ENCODE measurements at regions of chr12 and their contacts with region 1.

Region 1: DNA sequence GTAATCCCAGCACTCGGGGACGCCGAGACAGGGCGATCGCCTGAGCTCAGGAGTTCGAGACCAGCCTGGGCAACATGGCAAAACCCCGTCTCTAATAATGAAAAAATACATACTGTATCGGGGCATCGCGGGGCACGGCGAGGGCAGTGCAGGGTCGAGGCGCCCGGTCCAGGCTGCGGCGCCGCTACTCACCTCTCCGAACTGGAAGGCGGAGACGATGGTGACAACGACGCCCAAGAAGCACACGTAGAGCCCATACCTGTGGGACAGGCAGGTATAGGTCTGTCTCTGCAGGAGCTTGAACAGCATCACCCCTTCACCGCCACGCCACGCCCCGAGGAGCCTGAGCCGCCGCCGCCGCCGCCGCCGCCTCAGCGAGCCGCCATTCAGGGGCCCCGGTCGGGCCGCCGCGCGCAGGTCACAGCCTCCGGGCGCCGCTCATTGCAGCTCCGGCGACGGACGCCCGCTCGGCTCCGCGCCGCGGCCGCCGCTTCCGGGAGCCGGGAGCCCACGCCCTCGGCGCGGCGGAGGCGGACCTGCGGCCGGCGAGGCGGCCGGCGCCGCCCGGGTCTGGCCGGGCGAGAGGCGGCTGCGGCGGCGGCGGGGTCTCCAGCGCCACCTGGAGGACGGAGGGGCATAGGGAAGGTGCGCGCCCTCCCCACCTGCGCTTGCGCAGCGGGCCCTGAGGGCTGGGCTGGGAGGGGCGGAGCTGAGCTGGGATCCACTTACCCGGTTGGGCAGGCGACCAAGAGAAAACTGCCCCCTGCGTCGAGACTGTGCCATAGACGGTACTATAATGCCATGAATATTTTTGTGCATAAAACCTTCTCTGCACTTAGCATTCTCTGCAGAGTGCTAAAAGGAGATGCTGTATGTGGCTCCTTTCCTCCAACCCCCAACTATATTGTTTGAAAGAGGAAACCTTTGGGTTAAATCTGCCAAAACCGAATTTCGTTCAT is at the start of gene GNPTAB:
- DNase-seq: peak; percentile 93 to 98 (median 96)
- ATAC-seq: peak; percentile 89
- H3K4me3 ChIP-seq: peak within 1 kb of the TSS; percentile 92
- H3K4me3 Mint-ChIP-seq: peak within 1 kb of the TSS; percentile 94
- H3K27ac ChIP-seq: peak within 1 kb of the TSS; percentile 61 to 67
- H3K27ac Mint-ChIP-seq: peak within 1 kb of the TSS; percentile 97
- H3K4me1 ChIP-seq: peaks cover 34% of the 10 kb centered on the region
- H3K4me1 Mint-ChIP-seq: peaks cover 47% of the 10 kb centered on the region
- H3K27me3 ChIP-seq: no peaks in the 10 kb centered on the region
- H3K27me3 Mint-ChIP-seq: no peaks in the 10 kb centered on the region
- CTCF ChIP-seq: peak; percentile 60
- total RNA-seq, gene GNPTAB: 38.2 to 43.8 TPM

Region 2: GRCh38 chr12:101414533-101415119 is 416.0 kb before region 1 on chr12:
- CTCF ChIA-PET with region 1: no interaction called
- POLR2A ChIA-PET with region 1: no interaction called
- intact Hi-C with region 1: loop called (anchors 5 kb)
- DNase-seq: peak in 4 of 14 experiments; percentile 17 to 52 (median 42)
- ATAC-seq: no peak
- H3K4me3 ChIP-seq: no peak overlapping the region
- H3K4me3 Mint-ChIP-seq: no peak overlapping the region
- H3K27ac ChIP-seq: no peak overlapping the region
- H3K27ac Mint-ChIP-seq: no peak overlapping the region
- H3K4me1 ChIP-seq: no peaks in the 10 kb centered on the region
- H3K4me1 Mint-ChIP-seq: no peaks in the 10 kb centered on the region
- H3K27me3 ChIP-seq: no peaks in the 10 kb centered on the region
- H3K27me3 Mint-ChIP-seq: no peaks in the 10 kb centered on the region
- CTCF ChIP-seq: peak; percentile 69

Region 3: GRCh38 chr12:101459642-101460346 is 370.9 kb before region 1 on chr12:
- CTCF ChIA-PET with region 1: no interaction called
- POLR2A ChIA-PET with region 1: no interaction called
- intact Hi-C with region 1: no loop called
- DNase-seq: no peak
- ATAC-seq: no peak
- H3K4me3 ChIP-seq: no peak overlapping the region
- H3K4me3 Mint-ChIP-seq: no peak overlapping the region
- H3K27ac ChIP-seq: no peak overlapping the region
- H3K27ac Mint-ChIP-seq: no peak overlapping the region
- H3K4me1 ChIP-seq: peaks cover 13% of the 10 kb centered on the region
- H3K4me1 Mint-ChIP-seq: peaks cover 11% of the 10 kb centered on the region
- H3K27me3 ChIP-seq: no peaks in the 10 kb centered on the region
- H3K27me3 Mint-ChIP-seq: no peaks in the 10 kb centered on the region
- CTCF ChIP-seq: no peak

Region 4: GRCh38 chr12:101697197-101697929 is 133.3 kb before region 1 on chr12 and contains the start of gene CHPT1:
- CTCF ChIA-PET with region 1: no interaction called
- POLR2A ChIA-PET with region 1: interaction called, 5 read pairs
- intact Hi-C with region 1: loop called in 1 of 2 experiments (anchors 5 kb)
- DNase-seq: peak; percentile 22 to 80 (median 49)
- ATAC-seq: peak; percentile 80
- H3K4me3 ChIP-seq: peak within 1 kb of the TSS; percentile 93
- H3K4me3 Mint-ChIP-seq: peak within 1 kb of the TSS; percentile 95
- H3K27ac ChIP-seq: no peak within 1 kb of the TSS
- H3K27ac Mint-ChIP-seq: peak within 1 kb of the TSS; percentile 87
- H3K4me1 ChIP-seq: peaks cover 21% of the 10 kb centered on the region
- H3K4me1 Mint-ChIP-seq: peaks cover 46% of the 10 kb centered on the region
- H3K27me3 ChIP-seq: no peaks in the 10 kb centered on the region
- H3K27me3 Mint-ChIP-seq: no peaks in the 10 kb centered on the region
- CTCF ChIP-seq: no peak
- total RNA-seq, gene CHPT1: 10.8 to 11.9 TPM

Region 5: GRCh38 chr12:101792051-101792931 is 38.4 kb before region 1 on chr12:
- CTCF ChIA-PET with region 1: interaction called, 34 read pairs
- POLR2A ChIA-PET with region 1: interaction called, 9 read pairs
- intact Hi-C with region 1: loop called in 1 of 2 experiments (anchors 2 kb)
- DNase-seq: peak in 3 of 14 experiments; percentile 21 to 25 (median 25)
- ATAC-seq: peak; percentile 56
- H3K4me3 ChIP-seq: no peak overlapping the region
- H3K4me3 Mint-ChIP-seq: no peak overlapping the region
- H3K27ac ChIP-seq: no peak overlapping the region
- H3K27ac Mint-ChIP-seq: no peak overlapping the region
- H3K4me1 ChIP-seq: peaks cover 7% of the 10 kb centered on the region
- H3K4me1 Mint-ChIP-seq: peaks cover 8% of the 10 kb centered on the region
- H3K27me3 ChIP-seq: no peaks in the 10 kb centered on the region
- H3K27me3 Mint-ChIP-seq: no peaks in the 10 kb centered on the region
- CTCF ChIP-seq: peak; percentile 47

Region 6: DNA sequence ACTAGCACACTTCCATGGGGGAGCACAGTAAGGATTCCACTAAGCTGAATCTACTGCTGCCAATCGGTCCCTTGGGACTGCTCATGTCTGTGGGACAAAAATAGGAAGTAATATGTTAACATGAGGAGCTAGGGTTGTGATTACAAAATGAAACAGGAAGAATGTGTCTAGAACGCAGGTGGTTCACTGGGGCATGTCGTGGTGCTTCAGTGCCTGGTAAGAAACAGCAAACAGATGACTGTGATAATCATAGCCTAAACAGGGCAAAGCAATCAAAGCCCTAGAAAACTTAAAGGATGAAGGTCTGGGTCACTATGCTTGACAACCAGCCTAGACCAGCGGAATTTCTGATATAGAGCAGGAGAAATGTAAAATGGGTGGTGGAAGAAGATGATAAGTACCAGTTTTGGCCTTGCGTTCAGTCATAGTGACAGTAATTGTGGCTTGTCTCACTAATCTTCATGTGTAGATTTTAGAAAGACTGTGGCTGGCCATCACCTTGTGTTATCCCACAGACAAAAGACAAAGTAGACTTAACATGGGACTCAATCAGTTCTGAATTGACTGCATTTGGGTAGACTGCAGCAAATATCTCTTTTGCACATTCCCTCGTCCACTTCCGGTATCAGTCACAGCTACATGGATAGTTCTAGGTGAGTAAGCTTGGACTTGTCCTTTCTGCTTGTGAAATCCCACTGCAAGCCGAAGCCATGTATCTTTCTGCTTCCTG is 179.8 kb after region 1 on chr12:
- CTCF ChIA-PET with region 1: no interaction called
- POLR2A ChIA-PET with region 1: no interaction called
- intact Hi-C with region 1: no loop called
- DNase-seq: peak in 2 of 14 experiments; percentile 11 to 15
- ATAC-seq: no peak
- H3K4me3 ChIP-seq: no peak overlapping the region
- H3K4me3 Mint-ChIP-seq: no peak overlapping the region
- H3K27ac ChIP-seq: no peak overlapping the region
- H3K27ac Mint-ChIP-seq: peak overlapping the region; percentile 0
- H3K4me1 ChIP-seq: no peaks in the 10 kb centered on the region
- H3K4me1 Mint-ChIP-seq: no peaks in the 10 kb centered on the region
- H3K27me3 ChIP-seq: no peaks in the 10 kb centered on the region
- H3K27me3 Mint-ChIP-seq: no peaks in the 10 kb centered on the region
- CTCF ChIP-seq: no peak

Measured in CD4-positive, alpha-beta T cell (primary cell).